ENCODE measurements at regions of chr1 and their contacts with region 1.

Region 1: GRCh38 chr1:145858894-145859490 is at the start of gene PIAS3:
- DNase-seq: peak; percentile 79 to 95 (median 90)
- H3K4me3 ChIP-seq: peak within 1 kb of the TSS; percentile 56 to 97 (median 80)
- H3K27ac ChIP-seq: peak within 1 kb of the TSS; percentile 63 to 96 (median 89)
- H3K27me3 ChIP-seq: no peaks in the 10 kb centered on the region
- CTCF ChIP-seq: peak in 10 of 56 donors; percentile 3 to 34 (median 15)
- total RNA-seq, gene PIAS3: 21.8 to 43.6 (median 31.9) TPM

Region 2: GRCh38 chr1:145804235-145805045 is 54.6 kb before region 1 on chr1:
- intact Hi-C with region 1: no loop called
- DNase-seq: no peak
- H3K4me3 ChIP-seq: no peak overlapping the region
- H3K27ac ChIP-seq: peak overlapping the region in 1 of 59 donors; percentile 6
- H3K27me3 ChIP-seq: no peaks in the 10 kb centered on the region
- CTCF ChIP-seq: no peak

Region 3: DNA sequence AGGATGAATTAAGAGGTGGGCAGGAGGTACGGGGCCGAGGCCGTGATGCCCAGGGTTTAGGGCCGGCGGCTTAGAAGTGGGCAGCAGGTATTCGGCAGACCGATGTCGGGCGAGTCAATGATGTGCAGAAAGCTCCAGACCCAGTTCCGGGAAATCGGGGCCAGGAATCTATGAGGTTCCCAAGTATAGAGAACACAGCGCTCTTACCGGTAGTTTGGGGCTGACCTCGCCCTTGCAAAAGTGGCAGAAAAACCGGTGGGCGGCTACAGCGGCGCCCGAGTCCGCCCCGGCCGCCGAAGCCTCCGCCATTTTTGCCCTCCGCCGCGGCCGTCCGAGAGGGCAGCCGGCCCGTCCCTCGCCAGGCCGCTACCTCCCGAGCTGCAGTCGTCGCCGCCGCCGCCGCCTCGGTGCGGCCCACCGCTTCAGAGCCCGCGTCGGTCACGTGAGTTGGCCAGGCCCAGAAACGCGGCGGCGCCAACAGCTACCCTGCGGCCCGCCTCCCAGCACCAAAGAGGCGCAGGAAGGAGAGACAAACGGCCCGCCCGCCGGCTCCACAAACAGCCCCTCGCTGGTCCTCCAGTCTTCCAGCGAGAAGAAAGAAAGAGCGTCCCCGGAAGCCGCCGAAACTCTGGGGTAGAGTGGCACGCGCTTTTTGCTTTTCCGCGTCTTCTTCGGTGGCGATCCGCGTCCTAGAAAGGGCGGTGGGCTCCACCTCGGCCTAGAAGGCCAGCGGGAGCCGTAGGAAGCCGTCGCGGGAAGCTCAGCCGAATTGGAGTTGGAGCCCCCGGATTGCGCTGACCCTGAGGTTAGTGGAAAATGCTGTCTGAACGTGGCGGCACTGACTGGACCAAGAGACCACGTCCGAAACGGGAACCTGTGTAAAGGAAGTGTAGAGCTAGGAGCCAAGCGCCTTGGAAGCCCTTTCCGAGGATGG is 35.2 kb before region 1 on chr1 and contains the starts of genes POLR3C and RNF115:
- intact Hi-C with region 1: loop called (anchors 1 kb)
- DNase-seq: peak; percentile 82 to 94 (median 90)
- H3K4me3 ChIP-seq: peak within 1 kb of the TSS; percentile 55 to 98 (median 86)
- H3K27ac ChIP-seq: peak within 1 kb of the TSS; percentile 44 to 97 (median 93)
- H3K27me3 ChIP-seq: no peaks in the 10 kb centered on the region
- CTCF ChIP-seq: peak in 34 of 56 donors; percentile 3 to 51 (median 22)
- total RNA-seq, gene POLR3C: 17.3 to 35.6 (median 26.6) TPM
- total RNA-seq, gene RNF115: 20.5 to 38.6 (median 29.2) TPM

Region 4: DNA sequence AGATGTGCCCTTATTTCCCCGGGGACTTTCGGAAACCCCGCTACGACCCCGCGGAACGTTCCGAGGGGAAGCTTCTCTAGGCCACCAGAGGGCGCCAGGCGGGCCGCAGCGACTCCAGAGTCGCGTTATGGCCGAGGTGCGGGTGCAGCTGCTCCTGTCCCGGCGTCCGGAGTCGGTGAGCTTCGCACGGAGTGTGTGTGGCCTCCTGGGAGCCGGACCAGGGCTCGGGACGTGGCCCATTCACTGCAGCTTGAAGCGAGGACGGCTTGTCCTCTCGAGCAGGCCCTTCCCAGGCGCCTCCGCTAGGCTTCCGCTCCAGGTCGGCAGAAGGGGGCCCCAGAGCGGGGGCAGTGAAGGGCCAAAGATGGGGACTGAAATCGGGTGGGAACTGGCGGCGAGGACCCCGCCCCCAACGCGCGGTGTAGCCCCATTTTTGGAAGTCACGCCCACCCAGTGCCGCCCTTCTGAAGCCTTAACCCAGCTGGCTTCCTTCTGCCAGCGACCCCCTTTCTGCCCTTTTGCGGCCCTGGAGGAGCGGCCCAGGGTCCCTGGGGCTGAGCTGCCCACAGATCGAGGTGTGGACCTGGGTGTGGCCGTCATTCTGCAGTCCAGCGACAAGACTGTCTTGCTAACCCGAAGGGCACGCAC is 13.4 kb before region 1 on chr1 and contains the start of gene NUDT17:
- intact Hi-C with region 1: loop called (anchors 1 to 2 kb)
- DNase-seq: peak; percentile 57 to 79 (median 72)
- H3K4me3 ChIP-seq: peak within 1 kb of the TSS; percentile 45 to 82 (median 66)
- H3K27ac ChIP-seq: peak within 1 kb of the TSS in 57 of 59 donors; percentile 17 to 89 (median 76)
- H3K27me3 ChIP-seq: no peaks in the 10 kb centered on the region
- CTCF ChIP-seq: peak; percentile 52 to 95 (median 89)
- total RNA-seq, gene NUDT17: 2.6 to 10.1 (median 5.5) TPM

Region 5: GRCh38 chr1:145912128-145912641 is 53.2 kb after region 1 on chr1:
- intact Hi-C with region 1: loop called in 1 of 2 experiments (anchors 5 kb)
- DNase-seq: no peak
- H3K4me3 ChIP-seq: no peak overlapping the region
- H3K27ac ChIP-seq: no peak overlapping the region
- H3K27me3 ChIP-seq: no peaks in the 10 kb centered on the region
- CTCF ChIP-seq: no peak

Measured in dorsolateral prefrontal cortex (tissue), 120 donors.